Activated B cell treated with CpG ODN at 0.5 μM for 24 hours (primary cell): ENCODE measurements at regions of chr19 and their contacts with region 1.

Region 1: DNA sequence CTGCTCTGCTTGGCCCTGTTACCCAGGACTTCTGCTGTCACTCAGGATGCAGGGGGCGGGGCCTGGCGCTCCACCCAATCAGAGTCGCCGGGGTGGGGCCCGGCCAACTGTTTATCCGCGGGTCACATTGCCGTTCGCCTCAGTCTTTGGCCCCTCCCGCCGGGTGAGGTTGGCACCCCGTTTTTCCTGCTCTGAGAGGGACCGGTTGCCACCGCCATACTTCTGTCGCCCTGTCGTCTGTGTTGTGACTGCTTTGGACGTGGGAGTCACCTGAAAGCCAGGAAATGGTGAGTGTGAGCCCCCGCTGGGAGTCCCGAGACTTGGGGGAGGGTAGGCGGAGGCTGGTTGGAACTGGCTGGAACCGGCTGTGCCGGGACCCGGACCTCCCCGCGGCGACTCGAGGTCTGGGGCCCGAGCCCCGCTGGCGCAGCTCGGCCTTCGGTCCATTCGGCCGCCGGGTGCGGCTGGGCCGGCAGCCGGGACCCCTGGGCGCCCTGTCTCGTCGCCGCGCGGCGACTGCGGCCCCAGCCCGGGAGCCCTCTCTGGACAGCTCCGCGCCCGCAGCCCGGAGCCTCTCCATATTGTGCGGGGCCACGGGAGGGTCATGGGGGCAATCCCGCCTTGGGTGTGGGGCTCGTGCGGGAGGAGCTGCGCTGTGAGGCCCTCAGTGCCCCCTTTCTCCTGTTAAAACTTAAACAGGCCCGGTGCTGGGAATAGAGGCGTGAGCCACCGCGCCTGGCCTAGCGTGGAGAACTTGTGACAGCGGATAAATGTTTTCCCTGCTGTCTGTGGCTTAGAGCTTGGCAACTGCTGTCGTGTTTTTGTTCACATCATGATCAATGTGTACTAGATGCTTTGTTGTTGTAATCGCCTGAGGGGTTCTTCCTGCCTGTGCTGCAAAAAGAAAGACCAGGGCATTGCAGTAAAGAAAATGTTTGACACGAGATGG is at the start of gene ZNF844:
- DNase-seq: peak; percentile 81
- ATAC-seq: peak; percentile 95
- H3K4me3 Mint-ChIP-seq: peak within 1 kb of the TSS; percentile 92
- H3K27ac Mint-ChIP-seq: peak within 1 kb of the TSS; percentile 93
- H3K4me1 Mint-ChIP-seq: peaks cover 14% of the 10 kb centered on the region
- H3K27me3 Mint-ChIP-seq: no peaks in the 10 kb centered on the region
- CTCF ChIP-seq: no peak
- total RNA-seq, gene ZNF844: 24.8 and 27.7 TPM in 2 replicates

Region 2: DNA sequence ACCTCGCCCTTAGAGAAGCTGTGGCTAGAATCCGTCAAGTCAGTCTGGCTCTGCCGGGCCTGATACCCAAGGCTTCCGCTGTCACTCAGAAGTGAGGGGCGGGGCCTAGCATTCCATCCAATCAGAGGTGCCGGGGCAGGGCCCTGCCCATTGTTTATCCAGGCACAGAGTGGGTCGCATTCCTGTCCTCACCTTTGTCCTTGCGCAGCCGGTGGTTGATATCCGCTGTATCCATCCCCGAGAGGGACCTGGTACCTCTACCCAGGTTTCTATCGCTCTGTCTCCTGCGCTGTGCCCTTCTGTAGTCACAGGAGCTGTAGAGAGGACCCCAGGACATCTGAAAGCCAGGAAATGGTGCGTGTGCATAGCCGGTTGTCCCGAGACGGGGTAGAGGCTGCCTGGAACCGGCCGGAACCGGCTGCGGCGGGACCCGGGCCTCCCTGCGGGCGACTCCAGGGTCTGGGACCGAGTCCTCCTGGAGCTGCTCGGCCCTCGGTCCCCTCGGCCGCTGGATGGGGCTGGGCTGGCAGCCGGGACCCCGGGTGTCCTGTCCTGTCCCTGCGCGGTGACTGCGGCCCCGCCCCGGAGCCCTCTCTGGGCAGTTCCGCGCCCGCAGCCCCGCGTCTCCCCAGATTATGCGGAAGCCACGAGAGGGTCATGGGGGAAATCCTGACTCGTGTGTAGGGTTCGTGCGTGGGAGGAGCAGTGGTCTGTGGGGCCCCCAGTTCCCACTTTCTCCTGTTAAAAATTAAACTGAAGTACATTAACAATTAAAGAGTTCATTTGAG is 99.8 kb before region 1 on chr19 and contains the start of gene ZNF763:
- CTCF ChIA-PET with region 1: interaction called, 11 read pairs
- POLR2A ChIA-PET with region 1: interaction called, 8 read pairs
- intact Hi-C with region 1: no loop called
- DNase-seq: peak; percentile 79
- ATAC-seq: peak; percentile 92
- H3K4me3 Mint-ChIP-seq: peak within 1 kb of the TSS; percentile 93
- H3K27ac Mint-ChIP-seq: peak within 1 kb of the TSS; percentile 97
- H3K4me1 Mint-ChIP-seq: peaks cover 26% of the 10 kb centered on the region
- H3K27me3 Mint-ChIP-seq: no peaks in the 10 kb centered on the region
- CTCF ChIP-seq: no peak
- total RNA-seq, gene ZNF763: 9.8 and 10.0 TPM in 2 replicates

Region 3: DNA sequence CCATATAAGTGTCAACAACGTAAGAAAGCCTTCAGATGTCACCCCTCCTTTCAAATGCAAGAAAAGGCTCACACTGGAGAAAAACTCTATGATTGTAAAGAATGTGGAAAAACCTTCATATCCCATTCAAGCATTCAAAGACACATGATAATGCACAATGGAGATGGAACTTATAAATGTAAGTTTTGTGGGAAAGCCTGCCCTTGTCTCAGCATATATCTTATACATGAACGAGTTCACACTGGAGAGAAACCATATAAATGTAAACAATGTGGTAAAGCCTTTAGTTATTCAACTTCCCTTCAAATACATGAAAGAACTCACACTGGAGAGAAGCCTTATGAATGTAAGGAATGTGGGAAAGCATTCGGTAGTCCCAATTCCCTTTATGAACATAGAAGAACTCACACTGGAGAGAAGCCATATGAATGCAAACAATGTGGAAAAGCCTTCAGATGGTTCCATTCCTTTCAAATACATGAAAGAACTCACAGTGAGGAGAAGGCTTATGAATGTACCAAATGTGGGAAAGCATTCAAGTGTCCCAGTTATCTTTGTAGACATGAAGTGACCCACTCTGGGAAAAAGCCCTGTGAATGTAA is 10.8 kb after region 1 on chr19:
- CTCF ChIA-PET with region 1: interaction called, 5 read pairs
- POLR2A ChIA-PET with region 1: interaction called, 17 read pairs
- intact Hi-C with region 1: no loop called
- DNase-seq: no peak
- ATAC-seq: no peak
- H3K4me3 Mint-ChIP-seq: no peak overlapping the region
- H3K27ac Mint-ChIP-seq: no peak overlapping the region
- H3K4me1 Mint-ChIP-seq: no peaks in the 10 kb centered on the region
- H3K27me3 Mint-ChIP-seq: no peaks in the 10 kb centered on the region
- CTCF ChIP-seq: no peak

Region 4: DNA sequence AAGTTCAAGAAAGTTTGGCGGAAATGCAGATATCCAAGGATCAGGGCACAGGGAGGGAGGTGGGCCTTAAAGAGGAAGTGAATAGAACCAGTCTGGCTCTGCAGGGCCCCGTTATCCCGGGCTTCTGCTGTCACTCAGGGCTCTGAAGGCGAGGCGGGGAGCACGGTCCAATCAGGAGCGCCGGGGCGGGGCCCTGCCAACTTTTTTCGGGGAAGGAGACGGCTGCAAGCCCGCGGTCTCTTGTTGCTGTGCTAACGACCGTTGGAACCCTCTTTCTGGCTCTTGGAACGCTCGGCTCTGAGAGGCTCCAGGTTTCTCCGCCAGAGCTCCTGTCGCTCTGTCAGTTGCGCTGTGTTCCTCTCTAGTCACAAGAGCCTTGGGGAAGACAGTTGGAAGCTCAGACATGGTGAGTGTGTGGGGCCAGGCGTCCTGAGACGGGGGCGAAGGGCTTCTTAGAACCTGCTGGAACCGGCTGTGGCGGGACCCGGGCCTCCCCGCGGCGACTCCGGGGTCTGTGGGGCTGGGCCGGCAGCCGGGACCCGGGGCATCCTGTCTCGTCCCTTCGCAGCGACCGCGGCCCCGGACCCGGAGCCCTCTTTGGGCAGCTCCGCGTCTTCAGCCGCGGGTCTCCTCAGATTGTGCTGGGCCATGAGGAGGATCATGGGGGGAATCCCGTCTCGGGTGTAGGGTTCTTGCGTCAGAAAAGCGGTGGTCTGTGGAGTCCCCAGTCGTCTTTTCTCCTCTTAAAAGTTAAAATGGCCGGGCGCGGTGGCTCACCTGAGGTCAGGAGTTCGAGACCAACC is 27.4 kb after region 1 on chr19:
- CTCF ChIA-PET with region 1: interaction called, 10 read pairs
- POLR2A ChIA-PET with region 1: interaction called, 3 read pairs
- intact Hi-C with region 1: no loop called
- DNase-seq: peak; percentile 43
- ATAC-seq: peak; percentile 70
- H3K4me3 Mint-ChIP-seq: peak overlapping the region; percentile 83
- H3K27ac Mint-ChIP-seq: no peak overlapping the region
- H3K4me1 Mint-ChIP-seq: peaks cover 17% of the 10 kb centered on the region
- H3K27me3 Mint-ChIP-seq: peaks cover 3% of the 10 kb centered on the region
- CTCF ChIP-seq: no peak